ENCODE measurements at regions of chr1 and their contacts with region 1.

Region 1: GRCh38 chr1:117284399-117285215 is 73.9 kb upstream of the VTCN1 start:
- DNase-seq: peak; percentile 46
- H3K27ac ChIP-seq: no peak overlapping the region
- CTCF ChIP-seq: peak; percentile 38

Region 2: GRCh38 chr1:117067533-117068370 is 216.9 kb before region 1 on chr1:
- CTCF ChIA-PET with region 1: interaction called, 26 read pairs
- POLR2A ChIA-PET with region 1: no interaction called
- DNase-seq: peak; percentile 57
- H3K27ac ChIP-seq: no peak overlapping the region
- CTCF ChIP-seq: peak; percentile 80

Region 3: DNA sequence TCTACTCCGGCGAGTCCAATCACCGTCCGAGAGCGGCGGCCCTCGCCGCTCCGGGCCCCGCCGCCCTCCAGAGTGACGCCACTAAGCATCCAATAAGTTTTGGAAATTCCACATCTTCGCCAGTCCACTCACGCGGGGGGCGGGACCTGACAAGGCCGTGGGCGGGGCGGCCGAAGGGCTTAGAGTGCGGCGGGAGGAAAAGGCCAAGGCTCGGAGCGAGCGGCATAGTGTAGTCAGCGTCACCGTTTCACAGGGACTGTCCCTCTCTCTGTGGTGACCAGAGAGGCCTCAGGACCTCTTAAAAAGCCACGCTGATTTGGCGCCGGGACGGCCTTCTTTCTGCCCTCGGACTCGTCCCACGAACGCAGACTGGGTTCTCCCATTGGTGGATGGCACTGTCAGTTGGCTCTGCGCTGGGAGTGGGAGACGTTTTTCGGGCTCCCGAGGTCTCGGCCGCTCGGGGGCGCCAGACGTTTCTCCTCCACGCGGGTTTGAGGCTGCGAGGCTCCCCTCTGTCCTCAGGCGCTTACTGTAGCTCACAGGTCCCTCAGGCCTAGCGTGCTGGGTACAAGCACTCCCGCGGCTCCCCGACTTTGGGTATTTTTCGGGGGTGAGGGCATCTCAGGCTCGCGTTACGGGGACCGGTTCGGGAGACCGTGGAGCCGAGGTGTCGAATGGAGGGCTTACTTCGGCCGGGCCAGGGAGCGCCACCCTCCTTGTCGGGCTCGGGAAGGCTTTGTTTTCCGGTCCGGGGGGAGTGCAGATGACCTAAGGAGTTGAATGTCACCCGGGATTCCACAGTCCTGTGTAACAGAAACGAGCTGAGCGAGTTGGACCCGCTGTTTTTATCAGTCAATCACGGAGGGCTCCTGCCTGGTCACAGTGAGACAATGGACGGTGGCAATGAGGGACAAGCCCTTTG is 162.6 kb before region 1 on chr1:
- CTCF ChIA-PET with region 1: interaction called, 11 read pairs
- POLR2A ChIA-PET with region 1: no interaction called
- DNase-seq: peak; percentile 93
- H3K27ac ChIP-seq: peak overlapping the region; percentile 78
- CTCF ChIP-seq: peak; percentile 84

Region 4: DNA sequence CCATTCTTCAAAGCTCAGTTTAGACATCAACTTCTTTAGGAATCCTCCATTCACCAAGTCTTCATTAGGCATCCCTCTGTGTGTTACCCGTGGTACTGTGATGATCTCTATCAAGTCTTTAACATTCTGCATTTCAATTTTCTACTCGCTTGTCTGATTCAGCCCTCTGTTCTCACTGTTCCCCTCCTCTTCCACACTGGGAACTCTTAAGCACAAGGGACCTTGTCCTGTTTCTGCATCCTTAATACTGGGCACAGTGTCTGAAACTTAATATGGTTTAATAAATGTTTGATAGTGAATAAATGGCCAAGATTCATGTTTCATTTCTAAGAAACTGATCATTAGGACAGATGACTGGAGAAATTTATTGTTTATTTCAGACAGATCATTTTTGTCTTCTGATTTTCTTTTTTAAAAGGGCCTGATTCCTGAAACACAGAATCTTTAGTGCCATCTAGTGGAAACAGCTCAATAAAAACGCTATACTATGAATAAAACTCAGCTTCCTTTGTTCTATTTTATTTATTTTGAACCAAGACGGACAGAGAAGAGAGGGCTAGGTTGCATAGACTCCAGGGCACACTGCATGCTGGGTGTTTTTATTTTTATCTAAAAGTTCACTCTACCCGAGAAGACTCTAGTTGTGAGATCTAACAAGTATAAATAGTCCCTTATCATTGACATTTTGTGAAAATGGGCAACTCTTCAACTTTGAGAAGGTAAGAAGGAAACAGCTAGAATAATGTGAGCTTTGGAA is 156.1 kb before region 1 on chr1:
- CTCF ChIA-PET with region 1: interaction called, 11 read pairs
- POLR2A ChIA-PET with region 1: no interaction called
- DNase-seq: peak; percentile 49
- H3K27ac ChIP-seq: no peak overlapping the region
- CTCF ChIP-seq: peak; percentile 67

Region 5: GRCh38 chr1:117346206-117346928 is 61.8 kb after region 1 on chr1:
- CTCF ChIA-PET with region 1: no interaction called
- POLR2A ChIA-PET with region 1: no interaction called
- DNase-seq: no peak
- H3K27ac ChIP-seq: no peak overlapping the region
- CTCF ChIP-seq: no peak

Region 6: GRCh38 chr1:118147522-118147921 is 862.9 kb after region 1 on chr1:
- CTCF ChIA-PET with region 1: no interaction called
- POLR2A ChIA-PET with region 1: no interaction called
- DNase-seq: peak; percentile 47
- H3K27ac ChIP-seq: no peak overlapping the region
- CTCF ChIP-seq: no peak

Measured in RWPE1 (cell line).